ENCODE measurements at regions of chr3 and their contacts with region 1.

Region 1: GRCh38 chr3:179562591-179563270 is at the start of gene ACTL6A:
- DNase-seq: peak; percentile 99
- ATAC-seq: peak; percentile 93
- H3K4me3 ChIP-seq: peak within 1 kb of the TSS; percentile 80 to 84
- H3K27ac ChIP-seq: peak within 1 kb of the TSS; percentile 81
- H3K4me1 ChIP-seq: peaks cover 2 to 16% of the 10 kb centered on the region in 2 experiments; a peak in 1 of 4 replicates
- H3K27me3 ChIP-seq: no peaks in the 10 kb centered on the region
- CTCF ChIP-seq: no peak
- POLR2A ChIP-seq: peak; percentile 82
- RAD21 ChIP-seq: no peak
- total RNA-seq, gene ACTL6A: 61.9 TPM

Region 2: DNA sequence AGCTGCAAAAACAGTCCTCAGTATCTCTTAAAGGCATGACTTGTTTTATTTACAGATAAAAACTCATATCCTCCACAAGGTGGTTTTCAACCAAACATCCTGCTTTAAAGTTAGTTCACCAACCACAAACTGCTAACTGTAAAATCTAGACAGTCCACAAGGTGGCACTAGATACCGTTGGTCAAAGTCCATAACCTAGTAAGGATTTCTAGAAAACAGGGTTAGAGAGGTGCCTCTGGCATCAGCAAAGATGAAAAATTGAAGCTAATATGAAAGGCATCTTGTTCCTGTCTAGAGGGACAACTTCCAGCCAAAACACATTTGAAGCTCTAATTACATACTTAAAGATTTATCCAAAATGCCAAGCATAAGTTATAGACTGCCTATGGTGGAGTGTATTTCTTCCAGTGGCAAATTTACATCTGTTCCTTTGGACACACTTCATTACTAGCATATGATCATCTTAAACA is 547.1 kb before region 1 on chr3:
- CTCF ChIA-PET with region 1: no interaction called
- POLR2A ChIA-PET with region 1: no interaction called
- RAD21 ChIA-PET with region 1: no interaction called
- intact Hi-C with region 1: loop called (anchors 2 kb)
- DNase-seq: peak; percentile 69
- ATAC-seq: peak; percentile 95
- H3K4me3 ChIP-seq: no peak overlapping the region
- H3K27ac ChIP-seq: no peak overlapping the region
- H3K4me1 ChIP-seq: peaks cover 0 to 2% of the 10 kb centered on the region in 2 experiments; a peak in 1 of 4 replicates
- H3K27me3 ChIP-seq: no peaks in the 10 kb centered on the region
- CTCF ChIP-seq: peak; percentile 80 to 88 (median 87)
- POLR2A ChIP-seq: no peak
- RAD21 ChIP-seq: peak; percentile 91

Region 3: GRCh38 chr3:179147873-179148615 is 414.7 kb before region 1 on chr3 and contains the start of gene PIK3CA:
- CTCF ChIA-PET with region 1: no interaction called
- POLR2A ChIA-PET with region 1: no interaction called
- RAD21 ChIA-PET with region 1: no interaction called
- intact Hi-C with region 1: loop called (anchors 1 kb)
- DNase-seq: peak; percentile 94
- ATAC-seq: peak; percentile 85
- H3K4me3 ChIP-seq: peak within 1 kb of the TSS; percentile 65 to 84
- H3K27ac ChIP-seq: peak within 1 kb of the TSS; percentile 77
- H3K4me1 ChIP-seq: peaks cover 0 to 14% of the 10 kb centered on the region in 2 experiments; a peak in 3 of 4 replicates
- H3K27me3 ChIP-seq: no peaks in the 10 kb centered on the region
- CTCF ChIP-seq: no peak
- POLR2A ChIP-seq: peak; percentile 65
- RAD21 ChIP-seq: no peak
- total RNA-seq, gene PIK3CA: 17.9 TPM

Region 4: DNA sequence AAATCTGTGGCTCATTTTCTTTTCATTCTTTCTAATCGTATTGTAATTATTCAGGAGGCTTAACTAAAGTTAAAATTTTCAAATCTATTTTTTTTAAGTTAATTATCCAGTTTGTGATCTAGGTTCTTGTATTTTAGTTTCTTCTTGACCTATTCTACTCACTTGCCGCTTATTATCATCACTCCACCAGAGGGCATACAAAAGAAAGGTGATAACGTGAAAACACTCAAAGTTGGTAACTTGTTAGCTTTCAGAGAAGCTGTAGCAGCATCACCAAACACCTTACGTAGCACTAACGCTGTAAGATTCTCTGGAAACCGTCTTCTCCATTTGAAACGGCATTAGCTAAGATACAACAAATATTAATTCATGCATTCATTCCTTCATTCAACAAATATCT is 116.2 kb before region 1 on chr3:
- CTCF ChIA-PET with region 1: interaction called, 12 read pairs
- POLR2A ChIA-PET with region 1: no interaction called
- RAD21 ChIA-PET with region 1: no interaction called
- intact Hi-C with region 1: loop called (anchors 1 kb)
- DNase-seq: peak; percentile 7
- ATAC-seq: peak; percentile 72
- H3K4me3 ChIP-seq: no peak overlapping the region
- H3K27ac ChIP-seq: no peak overlapping the region
- H3K4me1 ChIP-seq: no peaks in the 10 kb centered on the region
- H3K27me3 ChIP-seq: no peaks in the 10 kb centered on the region
- CTCF ChIP-seq: peak; percentile 28 to 54 (median 45); a peak in 5 of 6 replicates
- POLR2A ChIP-seq: no peak
- RAD21 ChIP-seq: peak; percentile 46

Measured in HCT116 (cell line).